ENCODE measurements at regions of chr1 and their contacts with region 1.

Region 1: DNA sequence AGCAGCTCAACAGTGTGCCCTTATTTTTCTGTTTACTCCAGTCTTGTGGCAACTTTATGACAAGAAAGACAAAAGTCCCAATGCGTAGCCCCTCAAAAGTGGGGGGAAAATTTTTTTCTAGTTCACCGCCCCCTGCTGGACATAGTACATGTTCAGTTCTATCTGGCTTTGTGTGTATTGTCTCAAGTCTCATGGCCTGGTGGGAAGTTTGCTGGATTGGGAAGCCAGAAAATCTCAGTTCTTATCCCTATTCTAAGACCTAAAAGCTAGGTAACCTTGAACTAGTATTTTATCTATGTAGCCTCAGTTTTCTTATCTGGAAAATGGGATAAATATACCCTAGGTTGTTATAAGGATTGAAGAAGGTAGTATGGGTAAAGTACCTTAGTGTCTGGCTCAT is 55.8 kb upstream of the LDLRAP1 start:
- DNase-seq: peak; percentile 51
- ATAC-seq: no peak
- H3K4me3 Mint-ChIP-seq: no peak overlapping the region
- H3K27ac Mint-ChIP-seq: no peak overlapping the region
- H3K4me1 Mint-ChIP-seq: no peaks in the 10 kb centered on the region
- H3K27me3 Mint-ChIP-seq: no peaks in the 10 kb centered on the region

Region 2: DNA sequence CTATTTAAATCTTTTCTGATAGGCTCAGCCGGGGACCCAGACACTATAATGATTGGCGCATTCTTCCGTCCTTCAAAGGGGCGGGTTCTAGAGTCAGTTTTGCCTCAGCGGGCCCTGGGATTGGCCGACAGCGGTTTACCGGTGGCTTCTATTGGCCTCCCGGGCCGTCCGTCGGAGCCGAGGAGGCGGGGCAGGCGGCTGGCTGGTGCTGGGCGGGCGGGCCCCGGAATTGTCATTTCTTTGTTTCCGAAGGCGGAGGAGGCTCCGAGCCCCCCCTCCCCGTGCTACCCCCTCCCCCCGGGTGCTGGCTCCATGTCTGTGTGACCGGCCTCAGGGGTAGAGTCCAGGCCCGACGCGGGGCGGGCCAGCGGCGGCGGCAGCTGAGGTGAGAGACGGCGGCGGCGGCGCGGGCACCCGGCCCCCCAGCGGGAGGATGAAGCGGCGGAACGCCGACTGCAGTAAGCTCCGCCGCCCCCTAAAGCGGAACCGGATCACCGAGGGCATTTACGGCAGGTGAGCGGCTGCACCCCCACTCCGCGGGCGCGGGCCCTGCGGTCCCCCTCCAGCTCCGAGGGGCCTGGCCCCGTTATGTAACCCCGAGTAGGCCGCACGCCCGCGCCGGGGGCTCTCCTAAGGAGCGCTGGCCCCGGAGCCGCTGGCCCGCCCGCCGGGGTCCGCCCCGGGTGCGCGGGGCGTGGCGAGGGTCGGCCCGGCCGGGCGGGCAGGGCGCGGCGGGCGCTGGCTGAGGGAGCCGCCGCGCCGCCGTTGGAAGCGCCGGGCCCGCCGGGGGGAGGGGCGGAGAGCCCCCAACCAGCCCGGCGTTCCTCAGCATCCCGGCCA is 56.7 kb before region 1 on chr1 and contains the start of gene MACO1:
- CTCF ChIA-PET with region 1: interaction called, 10 read pairs
- POLR2A ChIA-PET with region 1: no interaction called
- DNase-seq: peak; percentile 97
- ATAC-seq: peak; percentile 92
- H3K4me3 Mint-ChIP-seq: peak within 1 kb of the TSS; percentile 98
- H3K27ac Mint-ChIP-seq: peak within 1 kb of the TSS; percentile 99
- H3K4me1 Mint-ChIP-seq: peaks cover 47% of the 10 kb centered on the region
- H3K27me3 Mint-ChIP-seq: no peaks in the 10 kb centered on the region
- total RNA-seq, gene MACO1: 16.4 to 17.2 TPM

Region 3: DNA sequence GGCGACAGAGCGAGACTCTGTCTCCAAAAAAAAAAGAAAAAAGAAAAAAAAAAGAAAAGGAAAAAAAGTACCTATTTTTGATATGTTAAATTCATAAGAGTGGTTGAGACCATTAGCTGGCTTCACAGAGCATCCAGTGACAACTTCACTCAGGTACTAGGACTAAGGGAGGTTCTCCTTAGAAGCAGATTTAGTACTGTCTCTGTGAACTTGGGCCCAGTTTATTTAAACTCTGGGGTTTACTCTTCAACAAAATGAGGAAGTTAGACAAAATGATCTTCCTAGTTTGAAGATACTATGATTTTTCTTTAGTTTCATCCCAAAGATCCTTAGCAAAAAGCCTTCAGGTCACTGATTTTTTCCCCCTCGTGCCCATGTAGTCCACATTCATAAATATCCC is 35.7 kb before region 1 on chr1:
- CTCF ChIA-PET with region 1: interaction called, 14 read pairs
- POLR2A ChIA-PET with region 1: no interaction called
- DNase-seq: no peak
- ATAC-seq: no peak
- H3K4me3 Mint-ChIP-seq: no peak overlapping the region
- H3K27ac Mint-ChIP-seq: no peak overlapping the region
- H3K4me1 Mint-ChIP-seq: peaks cover 8% of the 10 kb centered on the region
- H3K27me3 Mint-ChIP-seq: no peaks in the 10 kb centered on the region

Region 4: GRCh38 chr1:25476186-25477097 is 11.2 kb before region 1 on chr1:
- CTCF ChIA-PET with region 1: interaction called, 76 read pairs
- POLR2A ChIA-PET with region 1: no interaction called
- DNase-seq: no peak
- ATAC-seq: peak; percentile 28
- H3K4me3 Mint-ChIP-seq: no peak overlapping the region
- H3K27ac Mint-ChIP-seq: no peak overlapping the region
- H3K4me1 Mint-ChIP-seq: peaks cover 43% of the 10 kb centered on the region
- H3K27me3 Mint-ChIP-seq: no peaks in the 10 kb centered on the region

Region 5: GRCh38 chr1:25503551-25504426 is 16.2 kb after region 1 on chr1:
- CTCF ChIA-PET with region 1: interaction called, 35 read pairs
- POLR2A ChIA-PET with region 1: no interaction called
- DNase-seq: peak; percentile 72
- ATAC-seq: peak; percentile 93
- H3K4me3 Mint-ChIP-seq: no peak overlapping the region
- H3K27ac Mint-ChIP-seq: no peak overlapping the region
- H3K4me1 Mint-ChIP-seq: peaks cover 11% of the 10 kb centered on the region
- H3K27me3 Mint-ChIP-seq: peaks cover 2% of the 10 kb centered on the region